Activated CD8-positive, alpha-beta memory T cell treated with anti-CD3 and anti-CD28 coated beads, Interleukin-2, amount 10 ng/mL, durations not matched to agents 7 days and 5 days (primary cell): ENCODE measurements at regions of chr1 and their contacts with region 1.

Region 1: GRCh38 chr1:3775490-3776230 is 3.1 kb downstream of the SMIM1 start:
- DNase-seq: peak; percentile 55
- ATAC-seq: peak; percentile 36
- H3K4me3 Mint-ChIP-seq: no peak overlapping the region
- H3K27ac Mint-ChIP-seq: no peak overlapping the region
- H3K4me1 Mint-ChIP-seq: peaks cover 2% of the 10 kb centered on the region
- H3K27me3 Mint-ChIP-seq: no peaks in the 10 kb centered on the region

Region 2: GRCh38 chr1:3796215-3797061 is 20.8 kb after region 1 on chr1 and contains the start of gene LRRC47:
- CTCF ChIA-PET with region 1: interaction called, 25 read pairs
- DNase-seq: peak; percentile 96
- ATAC-seq: peak; percentile 99
- H3K4me3 Mint-ChIP-seq: peak within 1 kb of the TSS; percentile 87
- H3K27ac Mint-ChIP-seq: peak within 1 kb of the TSS; percentile 88
- H3K4me1 Mint-ChIP-seq: peaks cover 45% of the 10 kb centered on the region
- H3K27me3 Mint-ChIP-seq: peaks cover 3% of the 10 kb centered on the region
- total RNA-seq, gene LRRC47: 31.8 to 42.6 TPM

Region 3: DNA sequence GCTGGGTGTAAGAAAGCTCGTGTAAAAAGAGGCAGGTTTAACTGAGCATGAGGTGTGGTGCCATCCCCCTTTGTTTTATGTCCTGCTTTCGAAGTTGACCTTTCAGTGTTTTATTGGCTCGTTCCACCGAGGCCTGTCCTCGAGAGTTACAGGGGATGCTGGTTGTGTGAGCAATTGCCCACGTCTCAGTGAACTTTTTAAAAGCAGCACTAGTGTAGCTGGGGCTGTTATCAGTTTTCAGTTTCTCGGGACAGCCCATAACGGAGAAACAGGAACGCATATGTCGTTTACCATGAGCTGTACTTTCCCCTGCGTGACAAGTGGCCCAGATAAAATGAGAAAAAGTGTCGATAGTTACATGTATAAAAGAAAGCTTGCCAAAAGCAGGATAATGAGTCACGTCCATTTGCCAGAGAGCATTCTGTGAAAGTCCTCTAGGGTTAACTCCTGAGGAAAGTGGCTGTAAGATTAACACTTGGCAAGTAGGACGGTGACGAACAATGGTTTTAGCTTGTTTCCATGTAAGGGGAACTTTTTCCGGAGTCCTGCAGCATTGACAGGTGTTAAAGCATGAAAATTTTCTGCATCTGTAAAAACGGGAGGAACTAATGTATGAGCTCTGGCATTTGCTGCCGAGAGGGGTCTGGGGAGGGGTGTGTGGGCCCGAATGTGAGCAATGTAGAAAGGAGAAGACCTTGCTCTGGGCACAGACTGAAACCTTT is 28.4 kb after region 1 on chr1:
- CTCF ChIA-PET with region 1: interaction called, 25 read pairs
- DNase-seq: no peak
- ATAC-seq: no peak
- H3K4me3 Mint-ChIP-seq: no peak overlapping the region
- H3K27ac Mint-ChIP-seq: no peak overlapping the region
- H3K4me1 Mint-ChIP-seq: peaks cover 5% of the 10 kb centered on the region
- H3K27me3 Mint-ChIP-seq: peaks cover 23% of the 10 kb centered on the region

Region 4: GRCh38 chr1:3928586-3928985 is 152.9 kb after region 1 on chr1:
- CTCF ChIA-PET with region 1: no interaction called
- DNase-seq: no peak
- ATAC-seq: peak; percentile 44
- H3K4me3 Mint-ChIP-seq: no peak overlapping the region
- H3K27ac Mint-ChIP-seq: no peak overlapping the region
- H3K4me1 Mint-ChIP-seq: peaks cover 4% of the 10 kb centered on the region
- H3K27me3 Mint-ChIP-seq: no peaks in the 10 kb centered on the region